ENCODE measurements at regions of chr18 and their contacts with region 1.

Region 1: DNA sequence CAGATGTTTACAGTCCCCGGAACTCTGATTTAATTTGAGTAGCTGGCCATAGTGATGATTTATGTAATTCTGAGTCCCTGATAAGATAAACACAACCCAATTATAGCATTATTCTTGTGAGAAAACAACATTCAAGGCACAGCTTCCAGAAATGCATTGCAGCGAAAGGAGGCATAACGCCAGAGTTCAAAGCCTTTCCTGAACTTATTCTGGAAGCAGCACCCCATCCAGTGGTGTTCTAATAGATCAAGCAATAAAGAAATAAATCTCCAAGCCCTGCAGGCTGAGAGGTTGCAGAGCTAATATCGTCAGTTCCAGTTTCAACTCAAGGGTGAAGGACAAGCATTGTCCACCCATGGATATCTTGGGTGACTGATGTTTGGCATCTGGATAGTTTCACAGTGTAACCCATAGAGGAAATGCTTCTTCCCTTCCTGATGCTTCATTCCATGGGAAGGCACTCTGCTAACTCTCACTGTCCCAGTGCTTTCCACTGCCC is 18.8 kb downstream of the CDH2 start:
- DNase-seq: no peak
- H3K4me3 Mint-ChIP-seq: no peak overlapping the region
- H3K27ac Mint-ChIP-seq: no peak overlapping the region
- H3K4me1 Mint-ChIP-seq: no peaks in the 10 kb centered on the region
- H3K27me3 Mint-ChIP-seq: no peaks in the 10 kb centered on the region

Region 2: DNA sequence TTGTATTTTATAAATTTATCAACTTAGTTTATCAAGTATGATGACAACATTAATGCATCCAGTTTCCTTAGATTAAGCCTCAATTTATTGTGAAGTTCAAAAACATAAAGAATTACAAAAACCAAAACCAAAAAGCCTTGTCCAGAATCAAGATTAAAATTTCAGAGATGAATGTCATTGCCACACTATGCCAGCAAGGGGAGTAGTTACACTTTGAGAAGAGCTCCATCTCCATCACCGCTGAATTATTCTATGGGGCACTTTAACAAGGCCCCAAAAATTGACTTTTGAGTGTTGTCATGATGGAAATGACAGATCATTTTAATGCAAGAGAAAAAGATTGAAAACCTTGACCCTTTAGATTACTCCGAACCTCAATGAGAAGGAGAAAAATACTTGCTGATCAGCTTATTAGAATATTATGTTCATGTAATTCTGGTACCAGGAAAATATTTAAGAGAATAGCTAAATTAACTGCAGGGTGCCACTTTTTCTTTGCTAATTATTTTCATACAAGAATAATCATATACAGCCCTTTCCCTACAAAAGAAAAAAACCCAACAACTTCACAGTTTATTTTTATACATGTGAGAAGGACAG is 1140.1 kb before region 1 on chr18:
- intact Hi-C with region 1: loop called (anchors 5 kb)
- DNase-seq: no peak
- H3K4me3 Mint-ChIP-seq: no peak overlapping the region
- H3K27ac Mint-ChIP-seq: no peak overlapping the region
- H3K4me1 Mint-ChIP-seq: no peaks in the 10 kb centered on the region
- H3K27me3 Mint-ChIP-seq: no peaks in the 10 kb centered on the region

Region 3: DNA sequence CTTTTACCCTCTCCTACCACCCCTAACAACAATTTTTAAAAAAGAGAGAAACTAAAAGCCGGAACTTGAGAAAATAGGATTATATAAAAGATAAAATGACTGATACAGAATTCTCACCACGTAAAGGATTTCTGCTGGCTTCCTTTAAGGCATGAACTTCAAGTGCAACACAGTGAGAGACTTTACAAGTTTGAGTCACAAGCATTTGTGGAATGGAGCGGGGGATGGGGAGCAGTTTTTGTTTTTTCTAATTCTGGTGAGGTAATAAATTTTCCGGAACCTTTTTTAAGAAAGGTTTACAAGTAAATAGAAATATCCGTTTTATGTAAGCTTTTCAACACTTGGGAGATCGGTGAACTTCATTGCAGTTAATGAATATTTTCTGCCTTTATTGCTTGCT is 20.6 kb after region 1 on chr18:
- intact Hi-C with region 1: no loop called
- DNase-seq: no peak
- H3K4me3 Mint-ChIP-seq: no peak overlapping the region
- H3K27ac Mint-ChIP-seq: no peak overlapping the region
- H3K4me1 Mint-ChIP-seq: peaks cover 4% of the 10 kb centered on the region
- H3K27me3 Mint-ChIP-seq: peaks cover 39% of the 10 kb centered on the region